Activated T-helper 2 cell treated with anti-CD3 and anti-CD28 coated beads, Interferon-gamma antibody, Interleukin-2, Interleukin-4, amounts not matched to agents 10 μg/mL and 5 μg/mL and 100 μg/mL, durations not matched to agents 14 hours and 24 hours and 36 hours (primary cell): ENCODE measurements at regions of chr18 and their contacts with region 1.

Region 1: GRCh38 chr18:59139371-59140298 is at the start of gene SEC11C:
- DNase-seq: peak; percentile 95
- H3K4me3 Mint-ChIP-seq: peak within 1 kb of the TSS; percentile 93
- H3K27ac Mint-ChIP-seq: peak within 1 kb of the TSS; percentile 97
- H3K4me1 Mint-ChIP-seq: peaks cover 41% of the 10 kb centered on the region
- H3K27me3 Mint-ChIP-seq: peaks cover 18% of the 10 kb centered on the region
- total RNA-seq, gene SEC11C: 198 and 208 TPM in 2 replicates

Region 2: DNA sequence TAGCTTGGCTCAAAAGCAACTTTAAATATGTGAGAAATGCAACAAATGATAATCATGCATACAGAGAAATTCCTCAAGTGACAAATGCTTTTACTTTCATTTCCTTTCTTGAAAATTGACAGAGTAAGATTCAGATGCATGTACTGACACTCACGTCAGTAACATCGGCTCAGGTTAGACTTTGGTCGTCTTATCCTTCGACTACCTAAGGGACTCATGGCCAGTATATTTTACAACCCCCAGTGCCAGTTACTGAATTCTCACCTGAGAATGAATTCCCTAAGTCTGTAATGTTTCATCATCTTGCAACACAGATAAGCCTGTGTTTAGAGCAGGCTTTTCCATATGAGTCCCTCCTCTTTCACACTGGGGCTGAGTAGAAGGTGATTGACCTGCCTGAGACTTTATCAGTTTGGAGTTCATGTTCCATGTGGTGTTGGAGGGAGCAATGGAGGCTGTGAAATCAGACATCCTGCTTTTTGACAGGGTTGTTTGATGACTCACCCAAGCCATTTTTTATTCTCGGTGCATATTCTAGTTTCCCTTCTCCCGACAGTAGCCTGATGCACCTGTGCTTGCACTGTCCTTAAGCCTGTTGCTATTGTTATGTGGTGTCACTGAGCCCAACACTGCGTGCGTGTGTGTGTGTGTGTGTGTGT is 1306.1 kb before region 1 on chr18:
- intact Hi-C with region 1: loop called (anchors 5 kb)
- DNase-seq: no peak
- H3K4me3 Mint-ChIP-seq: no peak overlapping the region
- H3K27ac Mint-ChIP-seq: no peak overlapping the region
- H3K4me1 Mint-ChIP-seq: peaks cover 21% of the 10 kb centered on the region
- H3K27me3 Mint-ChIP-seq: peaks cover 19% of the 10 kb centered on the region

Region 3: GRCh38 chr18:58541789-58542425 is 597.7 kb before region 1 on chr18:
- intact Hi-C with region 1: loop called (anchors 10 kb)
- DNase-seq: peak; percentile 30
- H3K4me3 Mint-ChIP-seq: no peak overlapping the region
- H3K27ac Mint-ChIP-seq: peak overlapping the region; percentile 71
- H3K4me1 Mint-ChIP-seq: peaks cover 58% of the 10 kb centered on the region
- H3K27me3 Mint-ChIP-seq: peaks cover 28% of the 10 kb centered on the region

Region 4: DNA sequence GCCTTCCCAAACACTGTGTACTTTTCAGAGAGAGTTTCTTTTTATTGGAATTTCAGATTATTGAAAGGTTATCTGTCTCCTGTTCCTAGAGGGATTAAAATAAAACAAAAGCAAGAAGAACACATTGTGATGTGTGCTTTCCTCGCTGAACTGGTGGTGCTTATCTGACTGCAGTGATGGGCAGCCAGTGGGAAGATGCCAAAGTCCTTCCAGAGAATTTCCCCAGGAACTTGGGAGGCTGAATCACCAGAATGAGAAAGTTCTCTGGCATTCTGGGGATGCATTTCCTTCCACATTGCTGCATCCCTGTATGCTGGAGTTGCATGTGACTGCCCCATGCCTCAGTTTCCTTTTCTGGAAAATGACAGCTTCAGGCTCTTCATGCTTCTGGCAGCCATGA is 53.8 kb before region 1 on chr18:
- intact Hi-C with region 1: loop called (anchors 5 kb)
- DNase-seq: no peak
- H3K4me3 Mint-ChIP-seq: no peak overlapping the region
- H3K27ac Mint-ChIP-seq: no peak overlapping the region
- H3K4me1 Mint-ChIP-seq: peaks cover 6% of the 10 kb centered on the region
- H3K27me3 Mint-ChIP-seq: peaks cover 16% of the 10 kb centered on the region

Region 5: DNA sequence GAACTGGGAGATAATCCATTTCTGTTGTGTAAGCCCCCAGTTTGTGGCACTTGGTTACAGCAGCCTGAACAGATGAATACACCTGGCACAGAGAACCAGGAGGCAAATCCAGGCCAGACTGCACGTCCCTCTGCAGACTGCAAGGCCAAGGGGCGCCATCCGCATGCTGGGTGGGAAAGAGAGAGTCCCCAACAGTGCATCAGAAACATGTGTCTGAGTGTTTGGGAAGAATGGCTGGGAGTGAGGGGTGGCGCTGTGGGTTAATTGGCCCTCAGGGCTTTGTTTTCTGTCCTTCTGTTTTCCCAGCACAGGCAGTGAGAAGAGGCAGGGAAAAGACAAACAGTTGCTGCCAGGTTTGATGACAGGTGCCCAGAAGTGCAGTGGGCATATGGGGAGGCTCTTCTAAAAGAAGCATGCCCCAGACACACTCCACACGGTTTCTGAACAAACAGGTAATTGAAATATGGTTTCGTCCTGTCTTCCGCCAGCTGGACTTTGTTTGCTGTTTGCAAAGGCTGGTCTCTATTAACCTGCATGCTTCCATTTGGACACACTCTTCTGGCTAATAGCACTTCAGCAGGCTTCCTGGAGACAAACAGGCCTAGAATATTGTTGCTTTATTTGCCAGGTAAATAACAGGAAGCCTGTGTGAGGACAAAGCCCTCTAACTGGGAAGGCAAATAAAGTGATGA is 43.4 kb before region 1 on chr18:
- intact Hi-C with region 1: no loop called
- DNase-seq: no peak
- H3K4me3 Mint-ChIP-seq: no peak overlapping the region
- H3K27ac Mint-ChIP-seq: no peak overlapping the region
- H3K4me1 Mint-ChIP-seq: no peaks in the 10 kb centered on the region
- H3K27me3 Mint-ChIP-seq: peaks cover 9% of the 10 kb centered on the region

Region 6: DNA sequence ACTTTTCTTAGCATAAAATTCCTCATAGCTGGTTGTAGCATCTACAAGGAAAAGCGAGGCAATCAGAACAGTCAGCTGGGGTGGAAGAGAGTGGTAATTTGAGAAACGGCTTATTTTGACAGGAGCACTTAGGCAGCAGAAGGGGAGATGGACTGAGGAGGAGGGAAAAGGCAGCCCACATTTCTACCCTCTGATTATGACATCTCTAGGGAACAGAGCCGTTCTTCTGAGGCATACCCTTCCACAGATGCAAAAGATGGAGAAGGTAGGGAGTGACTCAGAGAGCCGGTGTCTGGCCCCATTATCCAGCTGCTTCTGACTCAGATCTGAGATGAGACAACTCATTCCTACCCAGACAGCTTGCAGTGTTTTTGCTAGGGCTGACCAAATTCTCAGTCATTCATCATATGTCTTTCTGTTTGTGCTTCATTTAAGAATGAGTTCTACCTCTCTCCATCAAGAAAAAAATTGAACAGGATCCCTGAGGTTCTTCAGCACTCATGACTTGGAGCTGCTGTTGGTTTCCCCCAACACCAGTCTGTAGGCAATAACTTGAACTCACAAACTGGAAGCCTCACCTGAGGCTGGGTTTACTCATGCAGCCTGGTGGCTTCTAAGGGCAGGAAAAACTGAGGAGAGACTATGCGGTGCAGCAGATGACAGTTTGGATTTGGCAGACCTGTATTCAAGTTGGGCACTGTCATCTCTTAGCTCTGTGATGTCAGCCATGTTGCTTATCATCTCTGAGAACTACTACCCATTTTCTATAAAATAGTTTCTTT is 15.9 kb before region 1 on chr18:
- intact Hi-C with region 1: loop called (anchors 1 kb)
- DNase-seq: no peak
- H3K4me3 Mint-ChIP-seq: no peak overlapping the region
- H3K27ac Mint-ChIP-seq: peak overlapping the region; percentile 76
- H3K4me1 Mint-ChIP-seq: peaks cover 6% of the 10 kb centered on the region
- H3K27me3 Mint-ChIP-seq: peaks cover 28% of the 10 kb centered on the region

Region 7: DNA sequence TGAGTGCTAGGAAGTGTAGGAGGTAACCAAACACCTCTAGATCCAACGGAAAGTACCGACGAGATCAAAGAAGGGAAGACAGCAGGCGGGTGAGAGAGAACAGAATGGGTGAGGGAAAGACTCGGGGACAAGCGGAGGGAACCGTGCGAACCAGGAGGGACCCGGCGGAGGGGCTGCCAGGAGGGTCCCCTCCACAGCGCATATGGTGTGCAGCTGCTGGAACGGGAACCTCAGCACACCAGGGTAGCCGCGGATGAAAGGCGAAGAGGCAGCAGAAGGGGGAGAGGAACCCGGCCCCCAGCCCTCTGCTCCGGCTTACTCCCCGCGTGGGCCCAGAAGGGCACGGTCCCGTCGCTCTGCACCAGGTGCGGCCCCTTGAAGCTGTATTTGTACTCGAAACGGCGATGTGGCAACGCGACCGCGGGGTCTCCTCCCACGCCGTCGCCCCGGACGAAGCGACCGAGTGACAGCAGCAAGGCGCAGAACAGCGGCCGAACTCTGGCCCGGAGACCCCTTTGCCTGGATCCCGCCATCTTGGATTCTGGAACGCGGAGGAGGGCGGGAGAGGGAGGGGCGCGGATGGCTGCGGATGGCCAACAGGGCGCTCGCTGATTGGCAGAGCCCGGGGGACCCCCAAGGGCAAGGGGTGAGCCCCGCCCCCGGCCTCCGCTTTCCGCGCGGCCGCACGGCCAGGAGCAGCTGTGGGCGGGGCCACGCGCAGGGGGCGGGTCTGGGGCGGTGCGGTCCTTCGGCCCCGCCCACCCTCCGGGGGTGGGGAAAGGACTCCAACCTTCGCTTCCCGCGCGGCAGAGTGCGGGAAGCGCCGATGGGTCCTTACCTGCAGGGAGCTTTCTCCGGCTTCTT is 219.3 kb after region 1 on chr18 and contains the start of gene LMAN1:
- intact Hi-C with region 1: loop called (anchors 1 kb)
- DNase-seq: peak; percentile 89
- H3K4me3 Mint-ChIP-seq: peak within 1 kb of the TSS; percentile 100
- H3K27ac Mint-ChIP-seq: peak within 1 kb of the TSS; percentile 100
- H3K4me1 Mint-ChIP-seq: peaks cover 29% of the 10 kb centered on the region
- H3K27me3 Mint-ChIP-seq: peaks cover 9% of the 10 kb centered on the region
- total RNA-seq, gene LMAN1: 141 and 146 TPM in 2 replicates